Activated T-helper 1 cell treated with anti-CD3 and anti-CD28 coated beads, Interleukin-12 subunit alpha, Interleukin-12 subunit beta, Interleukin-2, Interleukin-4 antibody, amounts not matched to agents 30 ng/mL and 10 ng/mL and 1 ng/mL, durations not matched to agents 14 hours and 24 hours and 36 hours (primary cell): ENCODE measurements at regions of chr10 and their contacts with region 1.

Region 1: GRCh38 chr10:3623746-3624145 is 161.3 kb downstream of the KLF6 start:
- DNase-seq: no peak
- H3K4me3 Mint-ChIP-seq: no peak overlapping the region
- H3K27ac Mint-ChIP-seq: peak overlapping the region; percentile 89
- H3K4me1 Mint-ChIP-seq: peaks cover 35% of the 10 kb centered on the region
- H3K27me3 Mint-ChIP-seq: peaks cover 8% of the 10 kb centered on the region

Region 2: GRCh38 chr10:3107426-3107961 is 516.3 kb before region 1 on chr10:
- intact Hi-C with region 1: no loop called
- DNase-seq: no peak
- H3K4me3 Mint-ChIP-seq: no peak overlapping the region
- H3K27ac Mint-ChIP-seq: no peak overlapping the region
- H3K4me1 Mint-ChIP-seq: no peaks in the 10 kb centered on the region
- H3K27me3 Mint-ChIP-seq: no peaks in the 10 kb centered on the region

Region 3: DNA sequence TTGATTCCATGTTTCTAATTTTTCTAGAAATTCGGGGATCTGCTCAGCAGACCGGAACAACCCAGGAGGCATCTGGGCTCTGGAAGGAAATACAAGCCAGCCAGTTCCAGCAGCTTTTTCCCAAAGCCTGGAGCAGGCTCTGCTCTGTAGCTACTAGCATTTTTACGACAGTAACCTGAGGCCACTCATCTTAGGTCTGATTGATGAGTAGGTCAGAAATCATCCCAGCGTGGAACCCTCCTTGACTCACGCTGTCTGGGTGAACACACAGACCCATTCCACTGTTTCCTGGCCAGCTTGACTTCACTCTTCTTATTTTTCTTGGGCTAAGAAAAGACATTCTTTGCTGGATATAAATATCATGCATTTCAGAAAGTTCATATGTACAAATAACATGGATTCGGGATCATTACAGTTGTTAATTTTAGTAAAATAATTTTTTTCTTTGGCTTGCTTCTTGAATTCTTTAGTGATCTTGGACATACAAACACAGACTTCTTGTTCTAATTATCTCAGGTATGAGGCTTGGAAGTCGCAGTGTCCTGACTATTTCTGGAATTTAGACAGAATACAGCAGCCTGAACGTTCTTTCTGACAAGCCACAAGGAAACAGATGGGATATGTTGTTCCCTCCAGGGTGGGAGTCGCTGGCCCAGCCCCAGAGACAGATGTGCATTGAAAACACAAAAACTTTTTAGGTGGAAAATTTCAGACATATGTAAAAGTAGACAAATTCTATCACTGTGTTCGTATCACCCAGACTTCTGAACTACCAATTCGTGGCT is 396.6 kb before region 1 on chr10:
- intact Hi-C with region 1: loop called (anchors 1 kb)
- DNase-seq: no peak
- H3K4me3 Mint-ChIP-seq: no peak overlapping the region
- H3K27ac Mint-ChIP-seq: no peak overlapping the region
- H3K4me1 Mint-ChIP-seq: peaks cover 18% of the 10 kb centered on the region
- H3K27me3 Mint-ChIP-seq: peaks cover 18% of the 10 kb centered on the region

Region 4: DNA sequence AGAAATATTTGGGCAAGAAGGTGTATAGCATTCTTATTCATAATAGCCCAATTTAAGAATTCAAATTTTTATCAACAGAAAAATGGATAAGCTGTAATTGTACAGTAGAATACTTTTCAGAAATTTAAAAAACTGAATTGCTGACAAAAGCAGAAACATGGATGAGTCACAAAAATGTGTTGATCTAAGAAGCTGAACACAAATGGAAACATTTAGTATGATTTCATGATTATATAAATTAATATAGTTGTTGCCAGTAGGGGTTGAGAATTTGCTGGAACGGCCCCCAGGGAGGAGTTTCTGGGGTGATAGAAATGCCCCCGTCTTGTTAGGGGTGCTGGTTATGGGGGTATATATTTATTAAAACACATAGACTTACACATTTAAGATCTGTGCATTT is 17.9 kb before region 1 on chr10:
- intact Hi-C with region 1: loop called (anchors 1 kb)
- DNase-seq: no peak
- H3K4me3 Mint-ChIP-seq: no peak overlapping the region
- H3K27ac Mint-ChIP-seq: peak overlapping the region; percentile 36
- H3K4me1 Mint-ChIP-seq: peaks cover 6% of the 10 kb centered on the region
- H3K27me3 Mint-ChIP-seq: peaks cover 22% of the 10 kb centered on the region

Region 5: GRCh38 chr10:3757638-3758490 is 134.1 kb after region 1 on chr10:
- intact Hi-C with region 1: loop called (anchors 1 kb)
- DNase-seq: peak; percentile 66
- H3K4me3 Mint-ChIP-seq: peak overlapping the region; percentile 78
- H3K27ac Mint-ChIP-seq: peak overlapping the region; percentile 100
- H3K4me1 Mint-ChIP-seq: peaks cover 84% of the 10 kb centered on the region
- H3K27me3 Mint-ChIP-seq: no peaks in the 10 kb centered on the region

Region 6: GRCh38 chr10:3805791-3806461 is 182.2 kb after region 1 on chr10:
- intact Hi-C with region 1: loop called (anchors 1 kb)
- DNase-seq: no peak
- H3K4me3 Mint-ChIP-seq: peak overlapping the region; percentile 70
- H3K27ac Mint-ChIP-seq: peak overlapping the region; percentile 99
- H3K4me1 Mint-ChIP-seq: peaks cover 76% of the 10 kb centered on the region
- H3K27me3 Mint-ChIP-seq: no peaks in the 10 kb centered on the region

Region 7: DNA sequence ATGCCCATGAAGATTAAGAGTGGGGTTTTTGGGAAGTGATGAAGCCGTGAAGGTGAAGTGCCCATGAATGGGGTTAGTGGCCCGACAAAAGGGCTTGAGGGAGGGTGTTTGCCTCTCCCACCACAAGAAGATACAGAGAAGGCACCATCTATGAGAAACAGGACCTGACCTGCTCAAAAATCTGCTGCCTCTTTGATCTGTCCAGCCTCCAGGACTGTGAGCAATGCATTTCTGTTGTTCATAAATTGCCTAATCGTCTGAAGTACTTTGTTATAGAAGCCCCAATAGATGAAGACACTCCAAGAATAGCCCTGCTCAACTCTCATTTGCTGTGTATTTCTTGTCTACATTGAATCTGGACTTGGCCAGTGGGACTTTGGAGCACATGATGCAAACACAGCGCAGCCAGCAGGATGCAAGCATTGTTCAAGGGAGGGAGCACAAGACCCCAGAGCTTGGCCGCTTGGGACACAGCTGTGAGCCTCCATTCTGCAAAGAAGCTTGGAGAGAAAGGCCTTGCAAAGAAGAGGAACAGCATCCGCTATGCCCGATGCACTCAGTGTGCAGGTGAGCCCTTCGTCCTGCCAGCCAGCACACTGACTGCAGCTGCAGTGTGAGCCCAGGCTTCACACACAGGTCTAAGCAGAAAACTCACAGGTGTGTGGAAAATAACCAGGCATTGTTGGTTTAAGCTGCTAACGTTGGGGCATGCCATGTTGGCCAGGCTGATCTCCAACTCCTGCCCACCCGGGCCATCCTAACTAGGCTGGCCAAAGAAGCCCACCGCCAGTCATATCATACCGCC is 234.5 kb after region 1 on chr10:
- intact Hi-C with region 1: no loop called
- DNase-seq: no peak
- H3K4me3 Mint-ChIP-seq: no peak overlapping the region
- H3K27ac Mint-ChIP-seq: no peak overlapping the region
- H3K4me1 Mint-ChIP-seq: peaks cover 4% of the 10 kb centered on the region
- H3K27me3 Mint-ChIP-seq: no peaks in the 10 kb centered on the region

Region 8: DNA sequence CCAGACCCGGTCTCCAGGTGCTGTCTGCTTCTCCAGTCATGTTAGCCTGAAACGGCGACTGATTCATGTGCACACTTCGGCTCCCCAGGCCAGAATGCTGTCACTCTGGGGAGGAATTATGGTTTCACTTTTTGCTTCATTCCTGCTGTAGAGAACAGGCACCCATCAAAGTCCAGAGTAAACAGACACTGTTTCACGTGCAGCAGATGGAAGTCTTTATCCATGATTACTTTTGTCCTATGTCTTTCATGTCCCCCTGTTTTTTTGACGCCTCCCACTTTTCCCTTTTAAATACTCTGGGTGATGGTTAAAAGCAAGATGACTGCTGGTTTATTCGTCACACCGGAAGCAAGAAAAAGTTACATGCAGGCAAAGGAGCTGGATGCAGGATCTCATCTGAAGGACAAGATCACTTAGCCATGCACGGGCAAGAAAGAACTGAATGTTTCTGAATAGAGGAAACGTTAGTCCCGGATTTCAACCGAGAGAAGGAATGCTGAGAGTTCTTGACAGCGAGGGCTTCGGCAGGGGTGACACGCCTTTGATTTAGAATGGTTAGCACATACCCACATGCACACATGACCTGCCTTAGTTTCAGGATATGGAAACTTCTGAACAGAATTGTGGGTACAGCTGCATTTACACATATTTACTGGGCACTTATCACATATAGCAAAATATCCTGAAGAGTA is 411.3 kb after region 1 on chr10:
- intact Hi-C with region 1: loop called (anchors 2 kb)
- DNase-seq: peak; percentile 11
- H3K4me3 Mint-ChIP-seq: peak overlapping the region; percentile 61
- H3K27ac Mint-ChIP-seq: peak overlapping the region; percentile 66
- H3K4me1 Mint-ChIP-seq: peaks cover 36% of the 10 kb centered on the region
- H3K27me3 Mint-ChIP-seq: no peaks in the 10 kb centered on the region